Naive thymus-derived CD8-positive, alpha-beta T cell (primary cell): ENCODE measurements at regions of chr9 and their contacts with region 1.

Region 1: DNA sequence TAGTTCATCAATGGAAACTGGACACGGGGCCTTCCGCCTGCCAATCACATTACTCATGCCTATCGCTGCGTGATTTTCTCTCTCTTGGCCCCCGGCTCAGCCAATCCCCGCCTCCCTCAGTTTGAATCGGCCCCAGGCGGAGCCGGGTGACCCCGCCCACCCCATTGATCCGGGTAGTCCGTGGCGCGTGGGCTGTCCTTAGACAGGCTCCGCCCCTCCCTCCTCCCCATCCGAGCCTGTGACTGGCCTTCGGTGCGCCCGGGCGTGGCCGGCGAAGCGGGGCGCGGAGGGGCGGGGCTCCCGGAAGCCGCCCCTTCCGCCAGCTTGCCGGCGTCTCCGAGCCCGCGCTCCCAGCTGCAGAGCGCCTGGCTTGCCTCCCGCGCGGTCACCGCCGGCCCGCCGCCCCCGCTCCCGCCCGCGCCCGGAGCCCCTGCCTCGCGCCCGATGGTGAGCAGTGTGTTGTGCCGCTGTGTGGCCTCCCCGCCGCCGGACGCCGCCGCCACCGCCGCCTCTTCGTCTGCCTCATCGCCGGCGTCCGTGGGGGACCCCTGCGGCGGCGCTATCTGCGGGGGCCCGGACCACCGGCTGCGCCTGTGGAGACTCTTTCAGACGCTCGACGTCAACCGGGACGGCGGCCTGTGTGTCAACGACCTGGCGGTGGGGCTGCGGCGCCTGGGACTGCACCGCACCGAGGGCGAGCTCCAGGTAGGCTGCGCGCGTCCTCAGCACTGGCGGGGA is at the start of gene SLC25A25:
- DNase-seq: peak; percentile 99 to 100 (median 100)
- ATAC-seq: peak; percentile 73 to 82
- H3K4me3 Mint-ChIP-seq: peak within 1 kb of the TSS in 8 of 10 donors; percentile 93 to 96 (median 95)
- H3K27ac Mint-ChIP-seq: peak within 1 kb of the TSS; percentile 70 to 96 (median 91)
- H3K4me1 Mint-ChIP-seq: peaks cover 25 to 69% (median 48%) of the 10 kb centered on the region in 4 donors
- H3K27me3 Mint-ChIP-seq: no peaks in the 10 kb centered on the region
- polyA plus RNA-seq, gene SLC25A25: 12.1 to 17.8 (median 13.8) TPM

Region 2: GRCh38 chr9:127955294-127956035 is 112.6 kb before region 1 on chr9:
- POLR2A ChIA-PET with region 1: interaction called, 15 read pairs
- DNase-seq: peak; percentile 56 to 86 (median 73)
- ATAC-seq: peak; percentile 79 to 89
- H3K4me3 Mint-ChIP-seq: peak overlapping the region; percentile 71 to 93 (median 80)
- H3K27ac Mint-ChIP-seq: peak overlapping the region; percentile 82 to 99 (median 93)
- H3K4me1 Mint-ChIP-seq: peaks cover 51 to 93% (median 87%) of the 10 kb centered on the region in 4 donors
- H3K27me3 Mint-ChIP-seq: no peaks in the 10 kb centered on the region

Region 3: DNA sequence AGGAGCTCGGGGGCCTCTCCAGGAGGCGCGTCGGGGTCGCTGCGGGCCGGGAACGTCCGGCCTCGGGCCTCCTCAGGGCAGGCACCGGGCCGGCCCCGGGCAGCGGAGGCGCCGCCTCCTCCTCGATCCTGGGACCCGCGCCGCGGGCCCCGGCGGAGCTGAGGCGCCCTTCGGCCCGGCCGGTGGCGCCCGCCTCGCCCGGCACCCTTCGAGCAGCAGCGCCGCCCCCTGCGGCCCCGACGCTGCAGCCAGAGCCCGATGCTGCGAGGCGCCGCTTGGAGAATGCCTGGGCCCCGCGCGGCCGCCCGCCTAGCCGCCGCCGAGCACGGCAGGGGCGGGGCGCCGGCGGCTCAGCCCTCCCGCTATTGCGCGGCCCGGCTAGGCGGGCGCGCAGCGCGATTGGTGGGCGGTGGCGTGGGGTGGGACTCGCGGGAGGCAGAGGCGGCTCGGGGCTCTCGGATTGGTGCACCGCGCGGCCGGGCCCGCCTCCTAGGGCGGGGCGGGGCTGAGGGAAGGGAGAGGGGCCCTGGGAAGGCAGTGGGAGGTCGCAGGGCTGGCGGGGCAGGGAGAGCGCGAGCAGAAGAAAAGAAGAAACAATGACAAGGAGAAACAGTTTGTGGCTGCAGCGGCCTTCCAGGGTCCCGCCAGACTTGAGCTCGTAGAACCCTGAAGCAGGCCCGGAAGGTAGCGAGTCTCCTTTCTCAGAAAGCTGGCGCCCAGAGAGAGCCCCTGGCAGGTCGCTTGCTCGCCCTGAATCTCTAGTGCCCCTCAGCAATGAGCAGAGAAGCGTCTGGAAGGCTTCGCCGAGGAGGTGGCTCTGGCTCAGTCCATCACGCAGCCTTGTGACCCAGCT is 87.1 kb before region 1 on chr9 and contains the start of gene EEIG1:
- POLR2A ChIA-PET with region 1: interaction called, 20 read pairs
- DNase-seq: peak; percentile 95 to 99 (median 98)
- ATAC-seq: peak; percentile 82 to 90
- H3K4me3 Mint-ChIP-seq: peak within 1 kb of the TSS; percentile 89 to 99 (median 95)
- H3K27ac Mint-ChIP-seq: peak within 1 kb of the TSS; percentile 93 to 100 (median 98)
- H3K4me1 Mint-ChIP-seq: peaks cover 26 to 64% (median 50%) of the 10 kb centered on the region in 4 donors
- H3K27me3 Mint-ChIP-seq: no peaks in the 10 kb centered on the region
- polyA plus RNA-seq, gene EEIG1: 134 to 318 (median 149) TPM

Region 4: GRCh38 chr9:128055344-128056040 is 12.6 kb before region 1 on chr9:
- POLR2A ChIA-PET with region 1: interaction called, 11 read pairs
- DNase-seq: no peak
- ATAC-seq: no peak
- H3K4me3 Mint-ChIP-seq: no peak overlapping the region
- H3K27ac Mint-ChIP-seq: no peak overlapping the region
- H3K4me1 Mint-ChIP-seq: peaks cover 0 to 14% (median 5%) of the 10 kb centered on the region in 4 donors
- H3K27me3 Mint-ChIP-seq: no peaks in the 10 kb centered on the region

Region 5: GRCh38 chr9:128094166-128094967 is 26.3 kb after region 1 on chr9:
- POLR2A ChIA-PET with region 1: interaction called, 54 read pairs
- DNase-seq: peak; percentile 39 to 78 (median 71)
- ATAC-seq: peak; percentile 54 to 70
- H3K4me3 Mint-ChIP-seq: peak overlapping the region; percentile 49 to 90 (median 84)
- H3K27ac Mint-ChIP-seq: peak overlapping the region; percentile 90 to 99 (median 95)
- H3K4me1 Mint-ChIP-seq: peaks cover 37 to 88% (median 82%) of the 10 kb centered on the region in 4 donors
- H3K27me3 Mint-ChIP-seq: no peaks in the 10 kb centered on the region

Region 6: DNA sequence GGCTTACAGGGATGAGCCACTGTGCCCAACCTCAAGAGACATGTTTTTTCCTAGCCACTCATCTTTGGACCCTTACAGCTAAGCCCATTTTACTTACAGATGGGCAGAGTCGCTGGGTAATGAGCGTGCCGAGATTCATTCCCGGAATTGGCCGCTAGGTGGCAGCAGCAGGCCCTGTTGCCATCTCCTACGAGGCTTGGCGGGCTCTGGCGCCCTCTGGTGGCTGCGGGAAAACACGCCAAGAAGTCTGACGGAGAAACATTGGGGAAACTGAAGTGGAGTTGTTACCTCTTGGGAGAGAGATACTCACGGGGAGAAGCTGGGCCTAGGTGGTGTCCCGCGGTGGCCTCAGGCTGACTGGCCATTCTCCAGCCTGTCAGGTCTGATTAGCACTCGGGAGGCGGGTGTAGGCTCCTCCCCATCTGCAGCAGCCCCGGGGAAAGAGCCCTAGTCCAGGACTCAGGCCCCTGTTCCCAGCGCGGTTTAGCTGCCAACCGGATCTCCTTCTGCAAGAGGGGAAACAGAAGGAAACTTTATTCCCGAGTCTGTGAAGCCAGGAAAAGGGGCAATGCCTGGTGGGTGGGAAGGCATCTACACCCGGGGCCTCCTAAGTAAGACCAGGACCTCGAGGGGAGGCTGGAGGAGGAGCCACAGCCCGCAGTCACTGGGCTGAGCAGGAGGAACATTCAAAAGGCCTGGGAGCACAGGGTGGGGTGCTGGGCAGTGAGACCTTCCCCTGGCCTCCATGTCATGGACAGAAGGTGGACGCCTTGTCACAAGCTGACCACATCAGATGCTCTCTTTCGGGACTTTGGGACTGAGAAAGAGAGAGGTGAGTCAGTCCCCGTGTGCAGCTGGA is 49.8 kb after region 1 on chr9:
- POLR2A ChIA-PET with region 1: no interaction called
- DNase-seq: peak; percentile 86 to 100 (median 94)
- ATAC-seq: peak; percentile 90 to 94
- H3K4me3 Mint-ChIP-seq: peak overlapping the region in 5 of 10 donors; percentile 25 to 62 (median 50)
- H3K27ac Mint-ChIP-seq: peak overlapping the region in 8 of 10 donors; percentile 18 to 92 (median 47)
- H3K4me1 Mint-ChIP-seq: peaks cover 3 to 24% (median 12%) of the 10 kb centered on the region in 4 donors
- H3K27me3 Mint-ChIP-seq: no peaks in the 10 kb centered on the region